HCT116 (cell line): ENCODE measurements at regions of chr5 and their contacts with region 1.

Region 1: DNA sequence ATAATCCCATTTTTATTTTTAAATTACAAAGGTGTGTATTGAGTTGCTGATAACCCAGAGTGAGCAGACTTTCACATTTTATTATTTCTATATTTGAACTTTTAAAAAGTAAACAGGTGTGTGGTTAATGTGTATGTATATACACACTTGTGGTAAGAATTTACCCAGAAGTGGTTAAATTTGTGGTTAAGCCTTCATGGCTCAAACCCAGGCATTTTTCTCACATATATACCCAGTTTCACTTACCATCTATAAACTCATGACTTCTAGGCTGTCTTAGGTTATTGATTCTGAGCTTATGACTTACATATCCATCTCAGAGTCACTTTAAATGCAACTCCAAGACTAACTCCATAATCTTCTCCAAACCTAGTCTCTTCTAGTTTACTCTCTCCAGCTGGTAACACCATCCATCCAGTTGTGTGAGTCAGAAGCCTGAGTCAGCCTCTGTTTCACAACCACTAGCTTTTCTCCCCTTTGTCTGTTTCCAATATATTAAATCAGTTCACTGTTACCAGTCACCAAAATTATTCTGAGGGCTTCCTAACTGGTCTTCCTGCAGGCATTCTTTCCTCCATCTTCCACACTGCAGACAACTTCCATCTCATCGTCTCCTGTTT is 20.2 kb downstream of the ZBED3 start:
- DNase-seq: no peak
- ATAC-seq: no peak
- H3K4me3 ChIP-seq: no peak overlapping the region
- H3K27ac ChIP-seq: no peak overlapping the region
- H3K4me1 ChIP-seq: no peaks in the 10 kb centered on the region
- H3K27me3 ChIP-seq: no peaks in the 10 kb centered on the region
- CTCF ChIP-seq: no peak
- POLR2A ChIP-seq: no peak
- RAD21 ChIP-seq: no peak

Region 2: GRCh38 chr5:77224712-77225355 is 157.9 kb after region 1 on chr5:
- CTCF ChIA-PET with region 1: no interaction called
- POLR2A ChIA-PET with region 1: no interaction called
- RAD21 ChIA-PET with region 1: no interaction called
- intact Hi-C with region 1: loop called (anchors 10 kb)
- DNase-seq: no peak
- ATAC-seq: no peak
- H3K4me3 ChIP-seq: no peak overlapping the region
- H3K27ac ChIP-seq: no peak overlapping the region
- H3K4me1 ChIP-seq: no peaks in the 10 kb centered on the region
- H3K27me3 ChIP-seq: 0 out of 2 replicates have a peak, but pooled peaks cover 9% of the 10 kb centered on the region
- CTCF ChIP-seq: no peak
- POLR2A ChIP-seq: no peak
- RAD21 ChIP-seq: no peak

Region 3: GRCh38 chr5:77491783-77492652 is 425.1 kb after region 1 on chr5 and contains the start of gene WDR41:
- CTCF ChIA-PET with region 1: no interaction called
- POLR2A ChIA-PET with region 1: no interaction called
- RAD21 ChIA-PET with region 1: no interaction called
- intact Hi-C with region 1: loop called (anchors 10 kb)
- DNase-seq: peak; percentile 85
- ATAC-seq: peak; percentile 94
- H3K4me3 ChIP-seq: peak within 1 kb of the TSS; percentile 73 to 78
- H3K27ac ChIP-seq: peak within 1 kb of the TSS; percentile 91
- H3K4me1 ChIP-seq: peaks cover 7 to 11% of the 10 kb centered on the region in 2 experiments; a peak in 3 of 4 replicates
- H3K27me3 ChIP-seq: no peaks in the 10 kb centered on the region
- CTCF ChIP-seq: peak; percentile 41 to 87 (median 81); a peak in 5 of 6 replicates
- POLR2A ChIP-seq: peak; percentile 39
- RAD21 ChIP-seq: peak; percentile 67
- total RNA-seq, gene WDR41: 54.1 TPM